ENCODE measurements at regions of chr9 and their contacts with region 1.

Region 1: DNA sequence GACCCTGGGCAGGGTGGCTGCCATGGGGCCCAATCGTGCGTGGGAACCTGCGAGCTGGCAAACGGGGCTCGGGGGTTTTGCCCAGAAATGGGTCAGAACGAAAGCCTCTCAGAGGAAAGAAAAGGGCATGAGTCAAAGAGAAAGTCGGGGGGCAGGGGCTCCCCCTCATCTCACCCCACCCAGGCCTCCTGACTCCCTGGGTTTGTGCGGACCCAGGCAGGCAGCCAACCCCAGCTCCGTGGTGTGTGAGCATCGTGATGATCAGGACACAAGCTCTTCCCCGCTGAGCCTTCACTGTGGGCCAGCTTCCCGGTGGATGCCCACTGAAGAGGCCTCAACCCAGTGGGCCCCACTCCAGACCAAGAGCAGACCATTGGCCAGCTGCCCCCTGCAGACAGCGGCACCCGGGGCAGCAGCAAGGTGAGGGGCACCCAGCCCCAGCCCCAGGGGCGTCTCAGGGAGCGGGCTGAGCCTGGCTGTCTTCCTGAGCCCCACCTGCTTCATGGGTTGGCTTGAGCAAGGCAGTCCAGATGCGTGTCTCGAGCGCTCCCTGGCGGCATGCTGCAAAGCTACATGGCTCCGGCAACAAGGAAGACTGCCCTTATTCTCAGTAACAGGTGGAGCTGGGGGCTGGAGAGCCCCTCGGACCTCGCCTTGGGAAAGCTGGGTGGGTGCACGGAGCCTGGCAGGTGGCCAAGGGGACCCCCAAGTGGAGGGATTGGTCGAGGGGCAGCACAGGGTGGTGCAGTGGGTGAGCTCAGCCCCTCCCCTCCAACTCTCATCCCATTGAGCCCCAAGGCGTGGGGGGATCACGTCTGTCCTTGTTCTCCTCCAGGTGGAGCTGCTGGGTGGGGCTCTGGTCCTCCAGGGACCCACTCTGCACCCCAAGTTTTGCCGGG is 3.2 kb upstream of the FUT7 start:
- DNase-seq: peak; percentile 74 to 94 (median 90)
- ATAC-seq: peak; percentile 89
- H3K4me3 ChIP-seq: peak overlapping the region; percentile 31 to 48
- H3K4me3 Mint-ChIP-seq: peak overlapping the region; percentile 70
- H3K27ac ChIP-seq: peak overlapping the region in 1 of 2 experiments; percentile 66
- H3K27ac Mint-ChIP-seq: peak overlapping the region; percentile 83
- H3K4me1 ChIP-seq: peaks cover 46% of the 10 kb centered on the region
- H3K4me1 Mint-ChIP-seq: peaks cover 34% of the 10 kb centered on the region
- H3K27me3 ChIP-seq: no peaks in the 10 kb centered on the region
- H3K27me3 Mint-ChIP-seq: no peaks in the 10 kb centered on the region
- CTCF ChIP-seq: peak; percentile 90

Region 2: DNA sequence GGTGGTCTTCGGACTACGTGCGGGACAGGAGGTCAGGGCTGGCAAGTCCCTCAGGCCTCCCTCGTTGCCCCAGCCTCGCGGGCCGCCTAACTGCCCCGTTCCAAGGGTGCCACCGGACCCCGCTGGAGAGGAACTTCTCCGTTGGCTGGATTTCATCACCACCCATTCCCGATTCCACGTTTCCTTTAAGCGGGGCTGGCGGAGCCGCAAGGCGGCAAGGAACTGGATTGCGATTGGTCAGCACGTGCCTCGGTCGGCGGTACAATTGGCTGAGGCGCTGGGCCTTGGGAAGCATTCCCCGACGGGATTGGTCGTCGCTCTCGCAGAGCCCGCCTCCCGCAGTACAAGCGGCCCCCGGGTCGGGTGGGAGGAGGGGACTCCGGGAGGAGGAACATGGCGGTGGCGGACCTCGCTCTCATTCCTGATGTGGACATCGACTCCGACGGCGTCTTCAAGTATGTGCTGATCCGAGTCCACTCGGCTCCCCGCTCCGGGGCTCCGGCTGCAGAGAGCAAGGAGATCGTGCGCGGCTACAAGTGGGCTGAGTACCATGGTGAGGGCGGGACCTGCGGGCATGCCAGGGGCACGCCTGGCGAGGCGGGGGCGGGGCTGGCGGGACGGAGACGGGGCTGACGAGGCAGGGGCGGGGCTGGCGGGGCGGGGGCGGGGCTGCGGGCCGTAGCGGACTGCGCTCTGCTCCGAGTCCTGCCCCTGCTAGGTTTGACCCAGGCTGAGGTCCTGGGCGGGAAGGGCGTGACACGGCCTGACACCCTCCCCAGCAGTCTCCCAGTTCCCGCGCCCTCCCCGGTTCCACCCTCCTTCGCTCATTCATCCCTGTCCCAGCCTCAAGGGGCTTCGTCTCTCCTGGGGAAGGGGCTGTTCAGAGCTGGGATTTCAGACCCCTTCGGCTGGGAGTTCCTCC is 185.8 kb before region 1 on chr9 and contains the start of gene PHPT1:
- CTCF ChIA-PET with region 1: interaction called, 36 read pairs
- POLR2A ChIA-PET with region 1: no interaction called
- intact Hi-C with region 1: no loop called
- DNase-seq: peak; percentile 91 to 98 (median 96)
- ATAC-seq: peak; percentile 92
- H3K4me3 ChIP-seq: peak within 1 kb of the TSS; percentile 77 to 99
- H3K4me3 Mint-ChIP-seq: peak within 1 kb of the TSS; percentile 93
- H3K27ac ChIP-seq: peak within 1 kb of the TSS; percentile 47 to 68
- H3K27ac Mint-ChIP-seq: peak within 1 kb of the TSS; percentile 88
- H3K4me1 ChIP-seq: peaks cover 29% of the 10 kb centered on the region
- H3K4me1 Mint-ChIP-seq: peaks cover 15% of the 10 kb centered on the region
- H3K27me3 ChIP-seq: peaks cover 3 to 11% of the 10 kb centered on the region in 2 experiments
- H3K27me3 Mint-ChIP-seq: peaks cover 9% of the 10 kb centered on the region
- CTCF ChIP-seq: no peak
- total RNA-seq, gene PHPT1: 15.7 to 17.1 TPM

Region 3: GRCh38 chr9:136949817-136950655 is 85.1 kb before region 1 on chr9:
- CTCF ChIA-PET with region 1: interaction called, 68 read pairs
- POLR2A ChIA-PET with region 1: interaction called, 7 read pairs
- intact Hi-C with region 1: loop called (anchors 1 kb)
- DNase-seq: peak; percentile 93 to 98 (median 97)
- ATAC-seq: peak; percentile 96
- H3K4me3 ChIP-seq: peak overlapping the region; percentile 68 to 70
- H3K4me3 Mint-ChIP-seq: peak overlapping the region; percentile 85
- H3K27ac ChIP-seq: peak overlapping the region; percentile 65 to 75
- H3K27ac Mint-ChIP-seq: peak overlapping the region; percentile 90
- H3K4me1 ChIP-seq: peaks cover 11% of the 10 kb centered on the region
- H3K4me1 Mint-ChIP-seq: peaks cover 14% of the 10 kb centered on the region
- H3K27me3 ChIP-seq: no peaks in the 10 kb centered on the region
- H3K27me3 Mint-ChIP-seq: no peaks in the 10 kb centered on the region
- CTCF ChIP-seq: peak; percentile 51

Region 4: DNA sequence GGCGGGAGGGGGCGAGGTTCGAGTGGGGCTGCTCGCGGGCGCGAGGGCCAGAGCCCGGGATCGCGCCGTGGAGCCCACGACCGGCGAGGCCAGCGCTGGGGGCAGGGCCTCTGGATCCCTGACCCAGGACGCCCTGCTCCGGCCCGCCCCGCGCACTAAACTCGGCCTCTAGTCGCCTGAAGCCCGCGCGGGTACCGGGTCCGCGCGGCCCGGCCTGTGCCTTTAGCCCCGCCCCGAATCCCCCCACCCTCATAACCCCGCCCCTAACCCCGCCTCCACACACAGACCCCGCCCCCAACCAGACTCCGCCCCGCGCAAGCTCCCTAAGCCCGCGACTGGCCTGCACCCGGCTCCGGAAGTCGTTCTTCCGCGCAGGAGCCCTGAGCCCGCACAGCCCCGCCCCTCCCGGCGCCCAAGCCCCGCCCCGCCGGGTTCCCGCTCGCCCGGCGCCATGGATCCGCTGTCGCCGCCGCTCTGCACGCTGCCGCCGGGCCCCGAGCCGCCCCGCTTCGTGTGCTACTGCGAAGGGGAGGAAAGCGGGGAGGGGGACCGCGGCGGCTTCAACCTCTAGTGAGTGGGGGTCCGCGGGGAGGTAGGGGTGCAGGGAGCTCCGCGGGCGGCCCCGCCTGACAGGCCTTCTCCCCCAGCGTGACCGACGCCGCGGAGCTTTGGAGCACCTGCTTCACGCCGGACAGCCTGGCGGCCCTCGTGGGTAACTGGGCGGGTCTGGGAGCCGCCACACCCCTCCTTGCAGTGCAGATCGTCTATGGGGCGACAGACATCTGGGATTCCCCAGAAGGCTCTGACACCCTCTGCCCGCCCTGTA is 42.9 kb before region 1 on chr9 and contains the start of gene PAXX:
- CTCF ChIA-PET with region 1: interaction called, 23 read pairs
- POLR2A ChIA-PET with region 1: interaction called, 9 read pairs
- intact Hi-C with region 1: loop called in 1 of 2 experiments (anchors 2 kb)
- DNase-seq: peak; percentile 84 to 96 (median 93)
- ATAC-seq: peak; percentile 82
- H3K4me3 ChIP-seq: peak within 1 kb of the TSS; percentile 79 to 84
- H3K4me3 Mint-ChIP-seq: peak within 1 kb of the TSS; percentile 88
- H3K27ac ChIP-seq: peak within 1 kb of the TSS; percentile 69 to 88
- H3K27ac Mint-ChIP-seq: peak within 1 kb of the TSS; percentile 95
- H3K4me1 ChIP-seq: peaks cover 35% of the 10 kb centered on the region
- H3K4me1 Mint-ChIP-seq: peaks cover 34% of the 10 kb centered on the region
- H3K27me3 ChIP-seq: no peaks in the 10 kb centered on the region
- H3K27me3 Mint-ChIP-seq: peaks cover 4% of the 10 kb centered on the region
- CTCF ChIP-seq: no peak
- total RNA-seq, gene PAXX: 101 to 111 TPM

Region 5: GRCh38 chr9:137021979-137022619 is 13.0 kb before region 1 on chr9:
- CTCF ChIA-PET with region 1: interaction called, 44 read pairs
- POLR2A ChIA-PET with region 1: interaction called, 5 read pairs
- intact Hi-C with region 1: no loop called
- DNase-seq: peak; percentile 33 to 87 (median 70)
- ATAC-seq: peak; percentile 92
- H3K4me3 ChIP-seq: no peak overlapping the region
- H3K4me3 Mint-ChIP-seq: no peak overlapping the region
- H3K27ac ChIP-seq: peak overlapping the region in 1 of 2 experiments; percentile 9
- H3K27ac Mint-ChIP-seq: no peak overlapping the region
- H3K4me1 ChIP-seq: peaks cover 18% of the 10 kb centered on the region
- H3K4me1 Mint-ChIP-seq: peaks cover 9% of the 10 kb centered on the region
- H3K27me3 ChIP-seq: no peaks in the 10 kb centered on the region
- H3K27me3 Mint-ChIP-seq: no peaks in the 10 kb centered on the region
- CTCF ChIP-seq: no peak

Region 6: GRCh38 chr9:137070201-137070905 is 35.2 kb after region 1 on chr9 and contains the start of gene SAPCD2:
- CTCF ChIA-PET with region 1: interaction called, 52 read pairs
- POLR2A ChIA-PET with region 1: interaction called, 9 read pairs
- intact Hi-C with region 1: no loop called
- DNase-seq: peak; percentile 66 to 94 (median 82)
- ATAC-seq: peak; percentile 87
- H3K4me3 ChIP-seq: peak within 1 kb of the TSS; percentile 46 to 50
- H3K4me3 Mint-ChIP-seq: peak within 1 kb of the TSS; percentile 70
- H3K27ac ChIP-seq: peak within 1 kb of the TSS in 1 of 2 experiments; percentile 30
- H3K27ac Mint-ChIP-seq: no peak within 1 kb of the TSS
- H3K4me1 ChIP-seq: peaks cover 14% of the 10 kb centered on the region
- H3K4me1 Mint-ChIP-seq: peaks cover 14% of the 10 kb centered on the region
- H3K27me3 ChIP-seq: peaks cover 0 to 9% of the 10 kb centered on the region in 2 experiments
- H3K27me3 Mint-ChIP-seq: no peaks in the 10 kb centered on the region
- CTCF ChIP-seq: no peak
- total RNA-seq, gene SAPCD2: 0.38 to 0.47 TPM

Measured in CD8-positive, alpha-beta T cell (primary cell).